ENCODE measurements at regions of chr19 and their contacts with region 1.

Region 1: GRCh38 chr19:43754503-43755255 is at the start of gene SMG9:
- DNase-seq: peak; percentile 99
- H3K4me3 ChIP-seq: peak within 1 kb of the TSS; percentile 67 to 92 (median 74)
- H3K27ac ChIP-seq: peak within 1 kb of the TSS; percentile 97
- H3K4me1 ChIP-seq: peaks cover 34% of the 10 kb centered on the region
- H3K27me3 ChIP-seq: no peaks in the 10 kb centered on the region
- CTCF ChIP-seq: no peak
- POLR2A ChIP-seq: peak; percentile 50
- total RNA-seq, gene SMG9: 45.0 and 53.3 TPM in 2 replicates

Region 2: DNA sequence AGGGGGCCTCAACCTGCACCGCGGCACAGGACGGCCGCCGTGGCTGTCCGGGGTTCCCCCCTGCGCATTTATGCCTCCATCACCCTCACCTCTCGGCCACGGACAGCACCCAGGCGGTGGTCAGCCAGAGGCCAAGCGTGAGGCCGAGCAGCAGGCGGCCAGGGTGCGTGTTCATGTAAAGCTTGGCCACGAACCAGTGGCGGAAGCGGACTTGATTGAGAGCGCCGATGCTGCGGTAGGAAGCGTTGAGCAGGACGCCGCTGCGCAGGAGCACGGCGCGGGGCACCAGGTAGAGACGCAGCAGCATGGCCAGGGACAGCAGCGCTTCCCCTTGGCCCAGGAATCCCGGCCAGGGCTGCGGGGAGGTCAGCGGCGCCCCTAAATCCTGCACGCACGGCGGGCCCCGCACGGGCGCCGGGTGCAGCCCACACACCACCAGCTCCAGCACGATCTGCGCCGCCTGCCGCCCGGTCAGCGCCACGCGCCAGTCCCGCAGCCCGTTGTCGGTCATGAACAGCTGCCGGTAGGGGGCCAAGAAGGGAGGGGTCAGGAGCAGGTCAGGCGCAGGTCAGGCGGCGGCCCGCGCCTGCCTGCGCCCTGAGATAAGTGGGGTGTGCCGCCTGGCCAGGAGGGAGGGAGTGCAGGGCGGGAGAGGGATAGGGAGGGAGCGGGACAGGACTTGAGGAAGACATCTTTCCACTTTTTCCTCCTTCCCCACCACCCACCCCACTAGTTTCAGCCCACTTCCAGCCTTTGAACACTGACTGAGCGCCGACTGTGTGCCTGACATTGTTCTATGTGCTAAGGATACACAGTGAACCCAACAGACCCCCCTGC is 19.6 kb after region 1 on chr19:
- CTCF ChIA-PET with region 1: interaction called, 55 read pairs
- POLR2A ChIA-PET with region 1: no interaction called
- dilution Hi-C with region 1: no loop called
- intact Hi-C with region 1: no loop called
- DNase-seq: peak; percentile 70
- H3K4me3 ChIP-seq: no peak overlapping the region
- H3K27ac ChIP-seq: no peak overlapping the region
- H3K4me1 ChIP-seq: peaks cover 22% of the 10 kb centered on the region
- H3K27me3 ChIP-seq: peaks cover 0 to 3% of the 10 kb centered on the region in 2 experiments
- CTCF ChIP-seq: peak; percentile 27 to 93
- POLR2A ChIP-seq: no peak